Activated CD4-positive, alpha-beta T cell treated with anti-CD3 and anti-CD28 coated beads, Interleukin-2, amount 10 ng/mL, durations not matched to agents 24 days and 14 days (primary cell): ENCODE measurements at regions of chr11 and their contacts with region 1.

Region 1: DNA sequence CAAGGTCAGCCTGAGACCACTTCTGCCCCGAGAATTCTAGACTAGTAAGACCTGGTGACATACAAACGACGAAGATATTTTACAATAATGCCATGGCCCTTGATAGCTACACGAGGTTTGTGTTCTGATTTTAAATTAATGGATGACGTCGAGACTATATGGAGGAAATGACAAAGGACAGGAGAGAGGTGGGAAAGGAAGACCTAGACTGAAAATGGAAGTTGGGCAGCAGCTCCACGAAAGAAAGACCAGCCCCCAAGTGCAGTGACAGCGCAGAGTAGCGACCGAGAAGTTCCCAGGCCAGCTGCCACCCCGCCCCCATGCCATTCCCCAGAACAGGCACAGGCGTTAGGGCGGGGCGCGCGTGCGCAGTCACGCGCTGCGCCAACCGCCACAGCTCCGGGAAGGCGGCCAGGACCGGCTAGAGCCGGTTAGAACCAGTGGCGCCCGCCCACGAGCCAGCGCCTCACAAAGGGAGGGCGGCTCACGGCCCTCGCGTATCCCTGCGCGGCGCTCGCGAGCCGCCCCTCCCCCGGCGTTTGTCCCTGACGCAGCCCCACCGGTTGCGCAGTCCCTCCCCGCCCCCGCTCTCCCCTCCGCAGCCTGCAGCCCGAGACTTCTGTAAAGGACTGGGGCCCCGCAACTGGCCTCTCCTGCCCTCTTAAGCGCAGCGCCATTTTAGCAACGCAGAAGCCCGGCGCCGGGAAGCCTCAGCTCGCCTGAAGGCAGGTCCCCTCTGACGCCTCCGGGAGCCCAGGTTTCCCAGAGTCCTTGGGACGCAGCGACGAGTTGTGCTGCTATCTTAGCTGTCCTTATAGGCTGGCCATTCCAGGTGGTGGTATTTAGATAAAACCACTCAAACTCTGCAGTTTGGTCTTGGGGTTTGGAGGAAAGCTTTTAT is 1.5 kb upstream of the MALAT1 start:
- DNase-seq: peak; percentile 99
- H3K4me3 Mint-ChIP-seq: no peak overlapping the region
- H3K27ac Mint-ChIP-seq: no peak overlapping the region
- H3K4me1 Mint-ChIP-seq: peaks cover 44% of the 10 kb centered on the region
- H3K27me3 Mint-ChIP-seq: no peaks in the 10 kb centered on the region

Region 2: DNA sequence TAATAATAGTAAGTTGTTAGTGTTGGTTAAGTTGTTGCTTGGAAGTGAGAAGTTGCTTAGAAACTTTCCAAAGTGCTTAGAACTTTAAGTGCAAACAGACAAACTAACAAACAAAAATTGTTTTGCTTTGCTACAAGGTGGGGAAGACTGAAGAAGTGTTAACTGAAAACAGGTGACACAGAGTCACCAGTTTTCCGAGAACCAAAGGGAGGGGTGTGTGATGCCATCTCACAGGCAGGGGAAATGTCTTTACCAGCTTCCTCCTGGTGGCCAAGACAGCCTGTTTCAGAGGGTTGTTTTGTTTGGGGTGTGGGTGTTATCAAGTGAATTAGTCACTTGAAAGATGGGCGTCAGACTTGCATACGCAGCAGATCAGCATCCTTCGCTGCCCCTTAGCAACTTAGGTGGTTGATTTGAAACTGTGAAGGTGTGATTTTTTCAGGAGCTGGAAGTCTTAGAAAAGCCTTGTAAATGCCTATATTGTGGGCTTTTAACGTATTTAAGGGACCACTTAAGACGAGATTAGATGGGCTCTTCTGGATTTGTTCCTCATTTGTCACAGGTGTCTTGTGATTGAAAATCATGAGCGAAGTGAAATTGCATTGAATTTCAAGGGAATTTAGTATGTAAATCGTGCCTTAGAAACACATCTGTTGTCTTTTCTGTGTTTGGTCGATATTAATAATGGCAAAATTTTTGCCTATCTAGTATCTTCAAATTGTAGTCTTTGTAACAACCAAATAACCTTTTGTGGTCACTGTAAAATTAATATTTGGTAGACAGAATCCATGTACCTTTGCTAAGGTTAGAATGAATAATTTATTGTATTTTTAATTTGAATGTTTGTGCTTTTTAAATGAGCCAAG is 72.1 kb before region 1 on chr11:
- intact Hi-C with region 1: loop called (anchors 1 kb)
- DNase-seq: peak; percentile 93
- H3K4me3 Mint-ChIP-seq: peak overlapping the region; percentile 100
- H3K27ac Mint-ChIP-seq: peak overlapping the region; percentile 100
- H3K4me1 Mint-ChIP-seq: peaks cover 67% of the 10 kb centered on the region
- H3K27me3 Mint-ChIP-seq: peaks cover 7% of the 10 kb centered on the region